GM12878 (cell line): ENCODE measurements at regions of chr5 and their contacts with region 1.

Region 1: DNA sequence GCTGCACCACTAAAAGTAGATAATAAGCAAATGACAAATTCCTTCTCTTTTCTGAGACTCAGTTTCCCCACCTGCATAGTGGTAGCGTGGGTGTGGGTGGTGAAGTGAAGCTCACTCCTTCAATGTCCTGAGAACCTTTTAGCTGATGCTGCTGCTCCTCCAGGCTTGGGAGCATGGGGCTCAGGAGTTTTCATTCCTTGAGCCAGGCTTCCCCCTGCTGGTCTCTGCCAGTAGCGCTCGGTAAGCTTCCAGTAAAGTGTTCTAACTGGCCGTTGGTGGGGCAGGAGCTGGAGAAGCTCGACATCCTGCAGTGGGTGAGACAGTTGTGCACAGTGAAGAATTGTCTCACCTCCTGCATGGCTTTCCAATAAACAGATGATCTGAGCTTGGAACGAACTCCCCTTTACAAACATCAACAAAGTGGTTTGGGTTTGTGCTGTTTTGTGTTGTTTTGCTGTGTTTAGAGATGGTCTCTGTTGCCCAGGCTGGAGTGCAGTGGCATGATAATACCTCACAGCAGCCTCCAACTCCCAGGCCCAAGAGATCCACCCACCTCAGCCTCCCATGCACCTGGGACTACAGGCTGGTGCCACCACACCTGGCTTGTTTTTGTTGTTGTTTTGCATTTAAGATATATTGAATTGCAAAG is 34.6 kb downstream of the SPARC start:
- DNase-seq: no peak
- ATAC-seq: peak; percentile 100
- H3K4me3 ChIP-seq: no peak overlapping the region
- H3K27ac ChIP-seq: no peak overlapping the region
- H3K4me1 ChIP-seq: no peaks in the 10 kb centered on the region
- H3K27me3 ChIP-seq: no peaks in the 10 kb centered on the region; a peak in 1 of 4 replicates
- CTCF ChIP-seq: peak; percentile 96 to 99 (median 97); a peak in 5 of 6 replicates
- EP300 ChIP-seq: no peak
- POLR2A ChIP-seq: no peak
- RAD21 ChIP-seq: peak; percentile 95

Region 2: DNA sequence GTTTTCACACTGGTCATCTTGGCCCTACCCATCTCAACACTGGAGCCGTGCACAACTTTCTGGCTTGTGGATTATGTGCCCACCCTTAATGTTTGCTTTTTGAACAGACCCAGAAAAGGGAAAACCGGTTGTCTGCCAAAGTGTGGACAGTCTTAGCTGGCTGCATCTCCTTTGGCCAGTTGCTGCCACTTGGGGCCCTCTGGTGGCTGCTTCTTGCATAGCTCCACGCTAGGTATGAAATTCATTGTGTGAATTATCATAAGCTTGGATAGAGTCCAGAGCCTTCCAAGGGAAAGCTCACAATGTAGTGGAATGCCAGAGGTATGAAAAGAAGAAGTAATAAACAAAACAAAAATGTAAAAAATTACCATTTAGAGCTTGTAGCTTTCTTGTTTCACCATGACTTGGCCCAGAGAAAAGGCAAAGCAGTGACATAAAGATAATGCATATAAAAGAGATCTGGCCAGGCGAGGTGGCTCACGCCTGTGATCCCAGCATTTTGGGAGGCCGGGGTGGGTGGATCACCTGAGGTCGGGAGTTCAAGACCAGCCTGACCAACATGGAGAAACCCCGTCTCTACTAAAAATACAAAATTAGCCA is 336.0 kb before region 1 on chr5:
- CTCF ChIA-PET with region 1: interaction called, 9 read pairs
- POLR2A ChIA-PET with region 1: no interaction called
- RAD21 ChIA-PET with region 1: interaction called, 6 read pairs
- SMC1A ChIA-PET with region 1: interaction called, 6 read pairs
- in situ Hi-C with region 1: no loop called
- intact Hi-C with region 1: loop called (anchors 5 kb)
- DNase-seq: peak; percentile 7
- ATAC-seq: peak; percentile 95
- H3K4me3 ChIP-seq: no peak overlapping the region
- H3K27ac ChIP-seq: no peak overlapping the region
- H3K4me1 ChIP-seq: no peaks in the 10 kb centered on the region
- H3K27me3 ChIP-seq: no peaks in the 10 kb centered on the region; a peak in 1 of 4 replicates
- CTCF ChIP-seq: peak; percentile 93 to 95 (median 94); a peak in 5 of 6 replicates
- EP300 ChIP-seq: no peak
- POLR2A ChIP-seq: no peak
- RAD21 ChIP-seq: peak; percentile 86

Region 3: GRCh38 chr5:151463137-151464029 is 188.7 kb before region 1 on chr5:
- CTCF ChIA-PET with region 1: interaction called, 13 read pairs
- POLR2A ChIA-PET with region 1: no interaction called
- RAD21 ChIA-PET with region 1: no interaction called
- SMC1A ChIA-PET with region 1: interaction called, 3 read pairs
- in situ Hi-C with region 1: no loop called
- intact Hi-C with region 1: no loop called
- DNase-seq: no peak
- ATAC-seq: no peak
- H3K4me3 ChIP-seq: no peak overlapping the region
- H3K27ac ChIP-seq: no peak overlapping the region
- H3K4me1 ChIP-seq: peaks cover 9% of the 10 kb centered on the region; the same call in 1 of the 2 replicates
- H3K27me3 ChIP-seq: no peaks in the 10 kb centered on the region
- CTCF ChIP-seq: peak; percentile 25 to 39 (median 29); a peak in 4 of 6 replicates
- EP300 ChIP-seq: no peak
- POLR2A ChIP-seq: no peak
- RAD21 ChIP-seq: peak; percentile 25

Region 4: GRCh38 chr5:151523335-151523734 is 128.8 kb before region 1 on chr5:
- CTCF ChIA-PET with region 1: interaction called, 105 read pairs
- POLR2A ChIA-PET with region 1: interaction called, 3 read pairs
- RAD21 ChIA-PET with region 1: interaction called, 48 read pairs
- SMC1A ChIA-PET with region 1: interaction called, 69 read pairs
- in situ Hi-C with region 1: loop called (anchors 5 kb)
- intact Hi-C with region 1: loop called (anchors 1 kb)
- DNase-seq: no peak
- ATAC-seq: peak; percentile 97
- H3K4me3 ChIP-seq: no peak overlapping the region
- H3K27ac ChIP-seq: no peak overlapping the region
- H3K4me1 ChIP-seq: no peaks in the 10 kb centered on the region
- H3K27me3 ChIP-seq: peaks cover 0 to 1% of the 10 kb centered on the region in 2 experiments; a peak in 2 of 4 replicates
- CTCF ChIP-seq: peak; percentile 64 to 71 (median 68); a peak in 5 of 6 replicates
- EP300 ChIP-seq: no peak
- POLR2A ChIP-seq: no peak
- RAD21 ChIP-seq: peak; percentile 77

Region 5: DNA sequence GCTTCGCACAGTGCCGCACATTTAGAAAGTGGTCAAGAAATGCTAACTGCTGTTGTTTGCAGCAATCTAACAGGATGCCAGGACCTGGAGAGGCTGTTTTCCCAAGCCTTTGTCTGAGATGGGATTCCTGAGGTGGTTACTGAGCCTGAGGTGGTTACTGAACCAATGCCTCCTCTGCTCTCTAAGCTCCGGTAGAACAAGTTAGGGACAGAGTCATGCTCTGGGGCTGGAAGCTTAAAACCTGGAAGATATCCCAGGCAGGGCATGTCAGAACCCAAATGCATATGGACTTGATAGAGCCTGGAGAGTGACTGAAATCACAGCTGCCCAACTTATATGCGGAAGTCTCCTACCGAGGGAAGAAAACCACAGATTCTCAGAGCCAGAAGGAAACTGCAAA is 14.4 kb before region 1 on chr5:
- CTCF ChIA-PET with region 1: interaction called, 13 read pairs
- POLR2A ChIA-PET with region 1: interaction called, 5 read pairs
- RAD21 ChIA-PET with region 1: interaction called, 23 read pairs
- SMC1A ChIA-PET with region 1: interaction called, 14 read pairs
- in situ Hi-C with region 1: no loop called
- intact Hi-C with region 1: no loop called
- DNase-seq: no peak
- ATAC-seq: no peak
- H3K4me3 ChIP-seq: no peak overlapping the region
- H3K27ac ChIP-seq: no peak overlapping the region
- H3K4me1 ChIP-seq: no peaks in the 10 kb centered on the region
- H3K27me3 ChIP-seq: no peaks in the 10 kb centered on the region; a peak in 3 of 4 replicates
- CTCF ChIP-seq: no peak
- EP300 ChIP-seq: no peak
- POLR2A ChIP-seq: no peak
- RAD21 ChIP-seq: no peak

Region 6: GRCh38 chr5:151680944-151681427 is 28.9 kb after region 1 on chr5:
- CTCF ChIA-PET with region 1: no interaction called
- POLR2A ChIA-PET with region 1: no interaction called
- RAD21 ChIA-PET with region 1: no interaction called
- SMC1A ChIA-PET with region 1: no interaction called
- in situ Hi-C with region 1: no loop called
- intact Hi-C with region 1: no loop called
- DNase-seq: no peak
- ATAC-seq: no peak
- H3K4me3 ChIP-seq: no peak overlapping the region
- H3K27ac ChIP-seq: no peak overlapping the region
- H3K4me1 ChIP-seq: peaks cover 21% of the 10 kb centered on the region
- H3K27me3 ChIP-seq: no peaks in the 10 kb centered on the region
- CTCF ChIP-seq: no peak
- EP300 ChIP-seq: no peak
- POLR2A ChIP-seq: no peak
- RAD21 ChIP-seq: no peak

Region 7: DNA sequence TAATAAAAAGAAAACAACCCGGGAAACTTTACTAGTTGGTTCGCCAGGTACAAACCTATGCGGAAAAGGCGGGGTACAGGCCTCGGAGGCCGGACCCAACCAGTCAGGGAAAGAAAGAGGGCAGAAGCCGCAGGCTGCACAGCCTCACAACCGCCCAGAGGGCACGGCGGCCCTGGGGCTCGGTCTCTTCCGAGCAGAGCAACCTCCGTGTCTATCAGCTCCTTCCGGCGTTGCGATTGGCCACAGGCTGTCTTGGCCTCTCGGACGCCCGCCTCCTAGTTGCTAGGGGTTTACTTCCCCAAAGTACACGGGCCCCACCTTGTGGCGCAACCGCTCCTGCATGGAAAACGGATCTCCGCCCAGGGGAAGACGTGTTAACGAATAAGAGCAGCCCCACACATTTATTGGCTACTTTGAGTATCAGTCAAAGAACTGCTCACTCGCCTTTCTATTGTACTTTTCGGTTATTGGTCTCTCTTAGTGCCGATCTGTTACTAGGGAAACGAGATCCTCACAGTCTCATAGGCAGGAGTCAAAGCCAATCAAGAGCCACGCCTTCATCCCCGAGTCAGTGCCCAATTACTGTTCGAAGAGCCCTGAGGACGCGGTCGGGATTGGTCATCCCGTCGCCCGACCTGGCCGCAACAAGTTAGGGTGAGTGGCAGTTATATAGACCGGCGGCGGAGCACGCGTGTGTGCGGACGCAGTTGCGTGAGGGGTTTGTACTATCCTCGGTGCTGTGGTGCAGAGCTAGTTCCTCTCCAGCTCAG is 119.3 kb after region 1 on chr5 and contains the start of gene G3BP1:
- CTCF ChIA-PET with region 1: interaction called, 34 read pairs
- POLR2A ChIA-PET with region 1: interaction called, 3 read pairs
- RAD21 ChIA-PET with region 1: interaction called, 13 read pairs
- SMC1A ChIA-PET with region 1: interaction called, 10 read pairs
- in situ Hi-C with region 1: no loop called
- intact Hi-C with region 1: no loop called
- DNase-seq: peak; percentile 100
- ATAC-seq: peak; percentile 87
- H3K4me3 ChIP-seq: peak within 1 kb of the TSS; percentile 97
- H3K27ac ChIP-seq: peak within 1 kb of the TSS; percentile 98
- H3K4me1 ChIP-seq: peaks cover 10% of the 10 kb centered on the region
- H3K27me3 ChIP-seq: no peaks in the 10 kb centered on the region
- CTCF ChIP-seq: peak; percentile 64 to 99 (median 71); a peak in 4 of 6 replicates
- EP300 ChIP-seq: no peak
- POLR2A ChIP-seq: peak; percentile 18
- RAD21 ChIP-seq: peak; percentile 67
- polyA plus RNA-seq, gene G3BP1: 49.7 to 52.7 TPM

Region 8: GRCh38 chr5:152164860-152165259 is 512.7 kb after region 1 on chr5:
- CTCF ChIA-PET with region 1: no interaction called
- POLR2A ChIA-PET with region 1: no interaction called
- RAD21 ChIA-PET with region 1: no interaction called
- SMC1A ChIA-PET with region 1: no interaction called
- in situ Hi-C with region 1: no loop called
- intact Hi-C with region 1: no loop called
- DNase-seq: no peak
- ATAC-seq: 0 out of 3 replicates have a peak, but pooled peaks have one; percentile 28
- H3K4me3 ChIP-seq: no peak overlapping the region
- H3K27ac ChIP-seq: no peak overlapping the region
- H3K4me1 ChIP-seq: no peaks in the 10 kb centered on the region
- H3K27me3 ChIP-seq: no peaks in the 10 kb centered on the region
- CTCF ChIP-seq: no peak
- EP300 ChIP-seq: no peak
- POLR2A ChIP-seq: no peak
- RAD21 ChIP-seq: no peak